T-cell (primary cell): ENCODE measurements at regions of chr19 and their contacts with region 1.

Region 1: DNA sequence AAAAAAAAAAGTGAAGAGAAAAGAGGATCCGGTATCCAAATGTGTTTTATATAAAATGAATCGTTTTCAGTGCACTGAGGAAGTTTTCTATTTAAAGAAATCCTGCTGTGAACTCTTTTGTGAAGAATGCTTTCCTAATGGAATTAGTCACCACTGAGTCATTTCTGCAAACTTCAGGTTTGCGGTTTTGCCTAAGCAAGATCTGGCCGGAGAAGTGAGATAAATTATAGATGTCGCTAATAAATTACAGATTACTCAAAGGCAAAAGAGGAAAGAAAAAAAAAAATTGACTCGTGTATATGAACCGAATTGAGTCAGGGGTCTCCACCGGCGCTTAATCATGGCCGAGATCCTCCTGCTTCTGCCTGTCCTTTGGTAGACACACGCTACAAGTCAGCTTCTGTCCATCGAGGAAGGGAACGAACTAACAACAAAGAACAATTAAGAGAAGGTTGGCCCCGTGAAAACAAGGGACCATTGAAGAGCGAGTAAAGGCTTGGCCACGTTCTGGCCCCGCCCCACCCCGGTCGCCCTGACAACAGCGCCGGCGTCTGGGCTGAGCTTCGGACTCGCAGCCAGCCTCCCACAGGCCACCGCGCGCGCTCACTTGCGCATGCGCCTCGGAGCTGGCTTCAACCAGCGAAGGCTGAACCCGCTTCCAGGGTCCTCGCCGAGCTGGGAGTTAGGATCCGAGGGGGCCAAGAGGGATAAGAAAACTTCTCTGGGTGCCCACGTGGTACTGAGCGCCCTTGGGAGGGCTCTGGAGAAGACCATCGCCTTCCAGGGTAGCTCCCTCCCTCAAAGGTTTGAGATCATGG is 33.0 kb upstream of the MRI1 start:
- DNase-seq: peak; percentile 84 to 97 (median 92)
- ATAC-seq: peak; percentile 100
- H3K4me3 ChIP-seq: peak overlapping the region; percentile 61 to 71
- H3K4me3 Mint-ChIP-seq: peak overlapping the region; percentile 75 to 94 (median 81)
- H3K27ac ChIP-seq: peak overlapping the region; percentile 27
- H3K27ac Mint-ChIP-seq: peak overlapping the region; percentile 88 to 97
- H3K4me1 ChIP-seq: peaks cover 5 to 17% of the 10 kb centered on the region in 2 experiments
- H3K4me1 Mint-ChIP-seq: peaks cover 12 to 20% (median 16%) of the 10 kb centered on the region in 3 donors
- H3K27me3 ChIP-seq: no peaks in the 10 kb centered on the region
- H3K27me3 Mint-ChIP-seq: no peaks in the 10 kb centered on the region

Region 2: GRCh38 chr19:13373602-13374001 is 357.8 kb before region 1 on chr19:
- CTCF ChIA-PET with region 1: no interaction called
- POLR2A ChIA-PET with region 1: no interaction called
- DNase-seq: no peak
- ATAC-seq: no peak
- H3K4me3 ChIP-seq: no peak overlapping the region
- H3K4me3 Mint-ChIP-seq: no peak overlapping the region
- H3K27ac ChIP-seq: no peak overlapping the region
- H3K27ac Mint-ChIP-seq: no peak overlapping the region
- H3K4me1 ChIP-seq: no peaks in the 10 kb centered on the region
- H3K4me1 Mint-ChIP-seq: no peaks in the 10 kb centered on the region
- H3K27me3 ChIP-seq: peaks cover 0 to 15% of the 10 kb centered on the region in 2 experiments
- H3K27me3 Mint-ChIP-seq: peaks cover 14 to 16% of the 10 kb centered on the region in 2 donors

Region 3: GRCh38 chr19:13610039-13610691 is 121.2 kb before region 1 on chr19:
- CTCF ChIA-PET with region 1: no interaction called
- POLR2A ChIA-PET with region 1: no interaction called
- DNase-seq: peak in 1 of 35 experiments; percentile 6
- ATAC-seq: no peak
- H3K4me3 ChIP-seq: no peak overlapping the region
- H3K4me3 Mint-ChIP-seq: no peak overlapping the region
- H3K27ac ChIP-seq: no peak overlapping the region
- H3K27ac Mint-ChIP-seq: no peak overlapping the region
- H3K4me1 ChIP-seq: peaks cover 0 to 4% of the 10 kb centered on the region in 2 experiments
- H3K4me1 Mint-ChIP-seq: peaks cover 3 to 11% (median 7%) of the 10 kb centered on the region in 3 donors
- H3K27me3 ChIP-seq: peaks cover 0 to 38% of the 10 kb centered on the region in 2 experiments
- H3K27me3 Mint-ChIP-seq: peaks cover 14 to 20% of the 10 kb centered on the region in 2 donors

Region 4: GRCh38 chr19:13665125-13665905 is 66.0 kb before region 1 on chr19:
- CTCF ChIA-PET with region 1: no interaction called
- POLR2A ChIA-PET with region 1: no interaction called
- DNase-seq: no peak
- ATAC-seq: no peak
- H3K4me3 ChIP-seq: no peak overlapping the region
- H3K4me3 Mint-ChIP-seq: no peak overlapping the region
- H3K27ac ChIP-seq: no peak overlapping the region
- H3K27ac Mint-ChIP-seq: no peak overlapping the region
- H3K4me1 ChIP-seq: no peaks in the 10 kb centered on the region
- H3K4me1 Mint-ChIP-seq: no peaks in the 10 kb centered on the region
- H3K27me3 ChIP-seq: peaks cover 0 to 5% of the 10 kb centered on the region in 2 experiments
- H3K27me3 Mint-ChIP-seq: no peaks in the 10 kb centered on the region

Region 5: DNA sequence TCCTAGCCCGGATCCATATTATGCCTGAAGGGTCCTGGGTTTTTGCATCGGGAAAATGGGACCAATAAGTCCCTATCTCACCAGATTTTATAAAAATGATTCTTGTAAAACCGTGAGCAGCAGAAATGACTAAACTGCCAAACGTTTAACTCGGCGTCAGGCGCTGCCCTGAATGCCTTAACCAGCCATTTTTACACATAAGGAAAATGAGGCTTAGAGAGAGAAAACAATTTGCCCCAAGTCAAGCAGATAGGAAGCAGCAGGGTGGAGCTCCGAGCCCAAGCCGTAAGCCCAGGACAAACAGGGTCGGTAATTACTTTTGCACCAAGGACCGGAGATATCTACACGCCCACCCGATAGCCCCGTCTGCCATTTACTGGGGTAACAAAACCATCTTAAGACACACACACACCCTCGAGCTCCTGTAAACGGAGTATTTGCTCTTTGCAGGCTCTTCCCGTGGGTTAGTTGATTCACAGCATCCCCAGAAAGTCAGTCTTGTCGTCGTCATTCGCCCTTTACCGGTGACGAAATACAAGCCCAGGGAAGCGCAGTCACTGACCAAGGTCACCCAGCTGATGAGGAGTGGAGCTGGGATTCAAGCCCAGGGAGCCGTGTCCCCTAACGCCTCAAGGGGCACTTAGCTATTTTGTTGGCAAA is 16.9 kb after region 1 on chr19:
- CTCF ChIA-PET with region 1: interaction called in 1 of 2 experiments, 10 read pairs
- POLR2A ChIA-PET with region 1: interaction called in 1 of 2 experiments, 4 read pairs
- DNase-seq: peak in 10 of 35 experiments; percentile 9 to 55 (median 16)
- ATAC-seq: peak; percentile 3 to 9 (median 3)
- H3K4me3 ChIP-seq: peak overlapping the region; percentile 81 to 94
- H3K4me3 Mint-ChIP-seq: peak overlapping the region; percentile 85 to 89 (median 86)
- H3K27ac ChIP-seq: peak overlapping the region; percentile 93
- H3K27ac Mint-ChIP-seq: peak overlapping the region; percentile 81 to 88
- H3K4me1 ChIP-seq: peaks cover 3 to 36% of the 10 kb centered on the region in 2 experiments
- H3K4me1 Mint-ChIP-seq: peaks cover 29 to 34% (median 33%) of the 10 kb centered on the region in 3 donors
- H3K27me3 ChIP-seq: no peaks in the 10 kb centered on the region
- H3K27me3 Mint-ChIP-seq: no peaks in the 10 kb centered on the region

Region 6: DNA sequence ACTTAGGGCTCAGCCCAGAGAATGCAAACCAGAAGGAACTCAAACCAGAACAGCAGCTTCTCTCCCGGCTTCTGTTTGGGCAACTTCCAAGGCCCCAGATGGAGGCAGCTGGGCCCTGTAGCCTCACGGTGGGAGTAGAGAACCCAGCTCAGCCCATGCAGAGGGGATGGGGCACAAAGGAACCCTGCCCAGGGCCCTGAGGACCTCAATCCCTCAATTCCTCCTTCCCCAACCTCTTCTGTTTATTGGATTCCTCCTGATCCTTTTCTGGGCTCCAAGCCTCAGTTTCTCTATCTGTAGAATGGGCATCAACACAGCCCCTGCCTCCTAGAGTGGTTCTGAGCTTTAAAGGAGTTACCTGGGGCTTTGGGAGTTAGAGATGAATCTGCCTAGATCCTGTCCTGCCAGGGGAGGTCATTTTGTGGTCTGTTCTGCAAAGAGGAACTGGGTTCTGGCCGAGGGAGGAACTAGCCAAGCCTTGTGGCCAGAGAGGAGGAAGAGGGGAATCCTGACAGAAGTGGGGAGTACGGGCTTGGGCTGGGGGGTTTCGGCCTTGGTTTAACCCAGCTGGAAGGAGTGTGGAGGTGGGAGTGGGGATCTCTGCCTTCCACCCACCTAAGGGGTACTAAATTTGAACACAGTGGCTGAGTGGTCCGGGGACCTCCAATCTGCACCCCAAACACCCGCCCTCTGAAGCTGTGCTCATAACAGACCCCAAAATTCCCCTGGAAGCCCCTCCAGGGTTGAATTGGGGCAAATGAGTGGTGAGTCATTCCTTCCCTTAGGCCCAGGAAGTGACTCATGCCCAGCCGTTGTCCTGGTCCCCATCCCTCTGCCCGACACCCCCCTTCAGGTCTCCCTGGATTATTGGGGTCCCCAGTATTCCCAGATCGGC is 652.6 kb after region 1 on chr19:
- CTCF ChIA-PET with region 1: no interaction called
- POLR2A ChIA-PET with region 1: no interaction called
- DNase-seq: peak in 4 of 35 experiments; percentile 32 to 77 (median 52)
- ATAC-seq: peak in 3 of 4 experiments; percentile 7 to 22 (median 12)
- H3K4me3 ChIP-seq: peak overlapping the region; percentile 83 to 88
- H3K4me3 Mint-ChIP-seq: peak overlapping the region; percentile 86 to 94 (median 87)
- H3K27ac ChIP-seq: peak overlapping the region; percentile 99
- H3K27ac Mint-ChIP-seq: peak overlapping the region; percentile 96 to 97
- H3K4me1 ChIP-seq: peaks cover 19 to 81% of the 10 kb centered on the region in 2 experiments
- H3K4me1 Mint-ChIP-seq: peaks cover 44 to 57% (median 49%) of the 10 kb centered on the region in 3 donors
- H3K27me3 ChIP-seq: no peaks in the 10 kb centered on the region
- H3K27me3 Mint-ChIP-seq: no peaks in the 10 kb centered on the region